ENCODE measurements at regions of chr1 and their contacts with region 1.

Region 1: GRCh38 chr1:107529502-107530149 is 388.8 kb downstream of the NTNG1 start:
- DNase-seq: peak; percentile 35 to 64 (median 63)
- H3K4me3 ChIP-seq: no peak overlapping the region
- H3K27ac ChIP-seq: no peak overlapping the region
- H3K4me1 ChIP-seq: peaks cover 0 to 2% (median 0%) of the 10 kb centered on the region in 4 experiments
- H3K27me3 ChIP-seq: no peaks in the 10 kb centered on the region

Region 2: DNA sequence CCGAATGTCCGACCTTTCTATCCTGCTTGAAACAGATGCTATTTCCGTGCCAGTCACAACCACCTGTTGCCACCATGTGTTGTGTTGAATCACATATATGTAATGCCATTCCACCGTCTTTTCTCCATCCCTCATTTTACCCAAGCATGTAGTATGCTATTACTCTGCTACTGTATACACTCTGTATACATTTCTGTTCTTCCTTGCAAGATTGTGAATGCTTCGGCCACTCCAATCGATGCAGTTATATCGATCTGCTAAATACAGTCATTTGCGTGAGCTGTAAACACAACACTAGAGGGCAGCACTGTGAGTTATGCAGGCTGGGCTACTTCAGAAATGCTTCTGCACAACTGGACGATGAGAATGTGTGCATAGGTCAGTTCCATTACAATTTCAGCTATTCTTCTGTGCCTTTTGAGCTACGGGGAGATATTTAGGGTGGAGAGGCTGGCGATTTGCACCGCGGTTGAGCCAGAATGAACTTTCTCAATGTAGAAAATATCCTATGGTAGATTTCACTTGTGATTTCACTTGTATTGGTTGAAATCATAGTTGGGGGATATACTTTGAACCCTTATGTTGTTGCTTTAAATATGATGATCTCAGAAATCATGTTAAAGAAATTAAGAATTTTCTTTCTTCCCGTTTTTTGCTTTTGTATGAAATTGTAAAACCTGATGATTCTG is 98.9 kb before region 1 on chr1:
- CTCF ChIA-PET with region 1: interaction called, 30 read pairs
- POLR2A ChIA-PET with region 1: no interaction called
- DNase-seq: peak; percentile 50 to 58 (median 57)
- H3K4me3 ChIP-seq: no peak overlapping the region
- H3K27ac ChIP-seq: no peak overlapping the region
- H3K4me1 ChIP-seq: no peaks in the 10 kb centered on the region
- H3K27me3 ChIP-seq: no peaks in the 10 kb centered on the region

Region 3: GRCh38 chr1:107515702-107516101 is 13.9 kb before region 1 on chr1:
- CTCF ChIA-PET with region 1: interaction called, 12 read pairs
- POLR2A ChIA-PET with region 1: no interaction called
- DNase-seq: no peak
- H3K4me3 ChIP-seq: no peak overlapping the region
- H3K27ac ChIP-seq: no peak overlapping the region
- H3K4me1 ChIP-seq: no peaks in the 10 kb centered on the region
- H3K27me3 ChIP-seq: no peaks in the 10 kb centered on the region

Measured in common myeloid progenitor, CD34-positive (primary cell).